ENCODE measurements at regions of chr4 and their contacts with region 1.

Region 1: DNA sequence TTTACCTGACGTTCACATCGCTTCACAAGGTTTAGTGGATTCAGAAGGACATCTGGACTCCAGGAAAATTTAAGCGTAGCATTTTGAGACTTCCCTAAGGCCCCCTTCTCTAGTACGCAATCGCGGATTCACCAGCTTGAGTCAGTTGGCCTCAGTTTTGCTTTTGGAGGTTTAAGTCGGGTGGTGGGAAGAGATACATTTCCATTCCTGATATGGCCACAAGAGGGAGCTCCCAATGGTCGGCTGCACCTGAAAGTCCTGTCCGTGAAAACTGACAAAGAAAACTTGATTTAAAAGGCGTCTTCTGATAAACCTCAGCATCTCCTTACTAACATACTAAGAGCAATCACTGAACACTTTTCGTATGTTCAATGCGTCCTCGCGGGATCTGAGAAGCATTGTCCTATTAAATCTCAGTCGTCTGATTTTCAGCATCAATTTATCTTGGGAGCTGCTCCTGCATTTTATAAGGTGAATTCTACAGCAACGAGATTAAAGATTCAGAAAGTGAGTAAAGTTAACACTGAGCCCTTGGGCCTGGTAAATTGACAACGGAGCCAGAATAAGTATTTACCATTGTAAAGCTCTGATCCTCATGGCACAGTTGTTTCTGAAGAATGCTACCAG is 50.6 kb downstream of the LGI2 start:
- DNase-seq: peak; percentile 54
- H3K4me3 ChIP-seq: peak overlapping the region in 2 of 4 donors; percentile 3 to 11
- H3K27ac ChIP-seq: peak overlapping the region in 3 of 4 donors; percentile 24 to 64 (median 54)
- H3K4me1 ChIP-seq: peaks cover 0 to 11% (median 5%) of the 10 kb centered on the region in 4 donors
- H3K27me3 ChIP-seq: no peaks in the 10 kb centered on the region
- CTCF ChIP-seq: peak; percentile 81 to 93 (median 86)
- EP300 ChIP-seq: no peak
- POLR2A ChIP-seq: no peak

Region 2: DNA sequence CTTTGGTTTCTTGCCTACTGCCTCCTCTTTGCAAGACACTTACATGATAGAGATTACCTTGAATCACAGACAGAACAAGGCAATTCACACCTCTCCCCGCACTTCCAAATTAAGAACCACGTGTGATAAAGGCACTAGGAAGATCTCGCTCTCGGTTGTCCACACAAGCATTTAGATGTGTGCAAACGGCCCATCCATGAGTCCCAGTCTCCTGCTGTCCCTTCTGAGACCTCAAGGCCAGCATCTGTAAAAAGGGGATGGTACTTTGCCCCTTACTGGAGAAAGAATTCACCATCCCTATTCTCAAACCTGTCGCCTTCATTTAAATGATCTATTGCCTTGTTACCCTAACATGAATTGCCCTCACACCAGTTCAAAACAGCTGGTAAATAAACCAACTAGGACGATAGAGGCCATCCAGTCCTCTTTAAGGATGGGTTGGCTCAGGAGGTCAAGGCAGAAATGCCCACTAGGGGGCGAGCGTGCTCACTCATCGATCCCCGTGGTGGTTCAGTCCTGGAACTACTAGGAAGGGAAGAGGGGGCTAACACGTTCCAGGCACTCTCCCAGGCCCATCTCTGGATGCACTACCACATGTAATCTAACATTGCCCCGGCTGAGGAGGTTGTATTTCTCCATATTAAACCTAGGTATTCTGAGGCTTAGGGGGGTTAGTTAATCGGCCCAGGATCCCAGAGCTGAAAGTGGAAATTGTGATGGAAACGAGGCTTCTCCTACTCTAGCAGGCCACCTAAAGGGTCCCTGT is 491.6 kb before region 1 on chr4:
- in situ Hi-C with region 1: loop called in 3 of 4 experiments (anchors 10 kb)
- intact Hi-C with region 1: no loop called
- DNase-seq: peak; percentile 79
- H3K4me3 ChIP-seq: no peak overlapping the region
- H3K27ac ChIP-seq: no peak overlapping the region
- H3K4me1 ChIP-seq: no peaks in the 10 kb centered on the region
- H3K27me3 ChIP-seq: no peaks in the 10 kb centered on the region
- CTCF ChIP-seq: peak; percentile 81 to 85 (median 83)
- EP300 ChIP-seq: no peak
- POLR2A ChIP-seq: no peak

Region 3: DNA sequence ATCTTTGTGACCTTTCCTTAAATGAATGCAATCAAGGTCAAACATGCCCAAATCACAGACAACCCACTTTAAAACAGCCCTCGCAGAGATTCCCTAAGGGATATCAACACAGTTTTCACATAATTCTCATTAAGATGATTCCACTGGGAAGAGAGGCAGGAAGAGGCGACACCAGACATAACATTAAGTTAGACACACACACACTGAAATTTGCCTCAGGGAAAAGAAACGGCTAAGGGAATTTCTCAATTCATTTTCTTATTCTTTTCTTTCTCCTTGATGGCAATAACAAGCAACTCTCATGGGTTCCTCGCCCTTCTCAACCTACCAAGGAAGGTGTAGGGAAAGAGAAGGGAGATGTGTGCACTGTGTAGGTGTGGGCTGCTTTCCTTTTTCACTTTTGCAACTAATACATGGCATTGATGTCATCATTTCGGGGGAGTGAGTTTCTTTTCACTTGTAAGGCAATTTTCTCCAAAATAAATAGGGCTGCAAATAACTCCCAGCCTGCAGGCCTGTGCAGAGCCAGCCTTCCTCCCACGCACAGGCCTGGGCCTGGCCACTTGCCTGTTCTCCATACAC is 143.4 kb before region 1 on chr4:
- in situ Hi-C with region 1: no loop called
- intact Hi-C with region 1: loop called (anchors 10 kb)
- DNase-seq: no peak
- H3K4me3 ChIP-seq: no peak overlapping the region
- H3K27ac ChIP-seq: no peak overlapping the region
- H3K4me1 ChIP-seq: peaks cover 0 to 5% (median 0%) of the 10 kb centered on the region in 4 donors
- H3K27me3 ChIP-seq: no peaks in the 10 kb centered on the region
- CTCF ChIP-seq: no peak
- EP300 ChIP-seq: no peak
- POLR2A ChIP-seq: no peak

Region 4: DNA sequence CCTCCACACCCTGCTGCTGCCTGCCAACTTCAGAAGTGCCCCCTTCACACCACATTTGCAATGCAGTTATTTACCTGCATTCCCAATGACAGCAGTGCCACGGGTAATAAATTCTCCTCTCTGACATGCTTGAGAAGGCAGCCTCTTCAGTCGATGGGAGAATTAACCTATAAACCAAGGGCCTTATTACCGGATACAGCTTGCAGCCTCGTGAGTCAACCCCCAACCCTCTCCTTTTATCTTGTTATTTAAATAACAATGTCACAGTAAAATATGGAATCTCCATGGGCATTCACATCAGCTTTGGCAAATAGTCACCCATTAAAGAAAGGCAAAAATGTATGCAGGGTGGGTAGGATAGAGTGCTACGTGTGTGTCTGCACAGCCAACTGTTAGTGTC is 85.3 kb after region 1 on chr4:
- in situ Hi-C with region 1: no loop called
- intact Hi-C with region 1: no loop called
- DNase-seq: no peak
- H3K4me3 ChIP-seq: no peak overlapping the region
- H3K27ac ChIP-seq: no peak overlapping the region
- H3K4me1 ChIP-seq: no peaks in the 10 kb centered on the region
- H3K27me3 ChIP-seq: no peaks in the 10 kb centered on the region
- CTCF ChIP-seq: no peak
- EP300 ChIP-seq: no peak
- POLR2A ChIP-seq: no peak

Region 5: DNA sequence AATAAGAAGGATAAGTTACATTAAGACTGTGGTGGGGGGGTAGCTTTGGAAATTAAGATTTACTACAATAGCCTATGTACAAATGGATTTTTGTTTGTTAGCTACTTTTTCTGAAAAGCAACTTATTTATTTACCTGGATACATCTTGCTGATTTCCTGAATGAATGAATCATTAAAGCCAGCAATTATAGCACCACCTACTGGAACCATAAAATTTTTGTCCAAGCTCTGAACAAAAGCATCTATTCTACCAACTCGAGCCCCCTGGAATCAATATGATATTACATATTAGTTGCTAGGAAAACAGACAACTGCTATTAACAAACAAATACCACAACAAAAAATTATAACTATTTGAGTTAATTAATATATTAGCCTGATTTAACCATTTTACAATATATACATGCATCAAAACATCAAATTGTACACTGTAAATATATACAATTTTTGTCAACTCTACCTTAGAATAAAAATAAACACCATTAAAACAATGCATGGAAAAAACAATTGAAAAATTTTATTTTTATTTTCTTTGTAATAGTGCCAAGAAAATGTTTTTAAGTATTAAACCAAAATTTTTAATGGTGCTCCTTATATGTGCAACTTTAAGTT is 164.8 kb after region 1 on chr4:
- in situ Hi-C with region 1: loop called in 2 of 4 experiments (anchors 25 kb)
- intact Hi-C with region 1: loop called (anchors 10 kb)
- DNase-seq: no peak
- H3K4me3 ChIP-seq: no peak overlapping the region
- H3K27ac ChIP-seq: no peak overlapping the region
- H3K4me1 ChIP-seq: no peaks in the 10 kb centered on the region
- H3K27me3 ChIP-seq: no peaks in the 10 kb centered on the region
- CTCF ChIP-seq: peak; percentile 42 to 52 (median 45)
- EP300 ChIP-seq: no peak
- POLR2A ChIP-seq: no peak

Region 6: DNA sequence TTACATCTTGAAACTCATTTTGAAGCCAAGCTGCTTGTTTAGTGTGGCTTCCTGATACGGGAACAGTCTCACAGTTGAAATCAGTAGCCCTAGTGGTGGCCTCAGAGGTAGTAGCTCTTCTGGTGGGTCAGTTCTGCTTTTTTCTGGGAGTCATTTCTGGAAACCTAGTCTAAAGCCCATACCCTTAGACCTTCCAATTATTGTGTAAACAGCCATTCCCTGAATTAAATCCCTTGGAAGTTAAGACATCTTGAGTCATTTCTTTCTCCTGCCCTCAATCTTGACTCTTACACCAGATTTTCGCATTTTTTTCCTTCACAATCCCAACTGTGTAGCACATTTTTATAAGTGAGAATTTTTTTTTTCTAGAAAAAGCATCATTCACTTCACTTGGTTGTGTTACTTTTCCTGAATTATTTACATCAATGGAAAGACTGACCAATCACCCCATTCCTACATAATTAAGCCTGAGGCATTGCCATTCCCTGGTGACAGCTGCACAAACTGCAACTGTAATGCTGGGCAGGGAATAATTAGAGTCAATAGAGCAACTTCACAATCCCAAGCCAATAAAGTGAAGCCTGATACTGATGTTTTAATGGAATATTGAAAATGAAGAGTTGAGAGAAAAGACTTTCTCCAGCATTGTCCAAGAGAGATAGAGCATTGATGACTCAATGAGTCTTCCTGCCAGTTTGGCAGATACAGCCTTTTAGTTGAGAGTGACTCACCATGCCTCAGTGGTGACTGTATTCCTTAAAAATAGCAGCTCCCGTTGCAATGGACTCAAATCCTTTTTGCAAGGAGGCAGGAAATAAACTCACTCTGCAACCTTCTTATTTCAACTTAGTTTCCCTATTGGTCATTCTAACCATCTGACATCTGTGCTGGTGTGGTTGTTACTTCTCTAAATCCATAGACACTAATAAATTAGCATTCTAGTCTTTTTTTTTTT is 193.1 kb after region 1 on chr4:
- in situ Hi-C with region 1: no loop called
- intact Hi-C with region 1: no loop called
- DNase-seq: no peak
- H3K4me3 ChIP-seq: no peak overlapping the region
- H3K27ac ChIP-seq: peak overlapping the region; percentile 45 to 69 (median 60)
- H3K4me1 ChIP-seq: peaks cover 0 to 13% (median 8%) of the 10 kb centered on the region in 4 donors
- H3K27me3 ChIP-seq: no peaks in the 10 kb centered on the region
- CTCF ChIP-seq: no peak
- EP300 ChIP-seq: no peak
- POLR2A ChIP-seq: no peak

Region 7: GRCh38 chr4:25367004-25367621 is 386.9 kb after region 1 on chr4:
- in situ Hi-C with region 1: loop called in 3 of 4 experiments (anchors 10 to 25 kb)
- intact Hi-C with region 1: no loop called
- DNase-seq: no peak
- H3K4me3 ChIP-seq: no peak overlapping the region
- H3K27ac ChIP-seq: no peak overlapping the region
- H3K4me1 ChIP-seq: no peaks in the 10 kb centered on the region
- H3K27me3 ChIP-seq: no peaks in the 10 kb centered on the region
- CTCF ChIP-seq: peak; percentile 48 to 60 (median 57)
- EP300 ChIP-seq: no peak
- POLR2A ChIP-seq: no peak